ENCODE measurements at regions of chr2 and their contacts with region 1.

Region 1: GRCh38 chr2:154623819-154624218 is 74.7 kb upstream of the KCNJ3 start:
- DNase-seq: peak in 7 of 10 donors; percentile 34 to 68 (median 62)
- H3K4me3 ChIP-seq: no peak overlapping the region
- H3K27ac ChIP-seq: no peak overlapping the region
- H3K27me3 ChIP-seq: no peaks in the 10 kb centered on the region
- CTCF ChIP-seq: peak; percentile 57 to 89 (median 78)

Region 2: GRCh38 chr2:154097833-154098398 is 525.9 kb before region 1 on chr2:
- intact Hi-C with region 1: no loop called
- DNase-seq: no peak
- H3K4me3 ChIP-seq: no peak overlapping the region
- H3K27ac ChIP-seq: no peak overlapping the region
- H3K27me3 ChIP-seq: no peaks in the 10 kb centered on the region
- CTCF ChIP-seq: no peak

Region 3: DNA sequence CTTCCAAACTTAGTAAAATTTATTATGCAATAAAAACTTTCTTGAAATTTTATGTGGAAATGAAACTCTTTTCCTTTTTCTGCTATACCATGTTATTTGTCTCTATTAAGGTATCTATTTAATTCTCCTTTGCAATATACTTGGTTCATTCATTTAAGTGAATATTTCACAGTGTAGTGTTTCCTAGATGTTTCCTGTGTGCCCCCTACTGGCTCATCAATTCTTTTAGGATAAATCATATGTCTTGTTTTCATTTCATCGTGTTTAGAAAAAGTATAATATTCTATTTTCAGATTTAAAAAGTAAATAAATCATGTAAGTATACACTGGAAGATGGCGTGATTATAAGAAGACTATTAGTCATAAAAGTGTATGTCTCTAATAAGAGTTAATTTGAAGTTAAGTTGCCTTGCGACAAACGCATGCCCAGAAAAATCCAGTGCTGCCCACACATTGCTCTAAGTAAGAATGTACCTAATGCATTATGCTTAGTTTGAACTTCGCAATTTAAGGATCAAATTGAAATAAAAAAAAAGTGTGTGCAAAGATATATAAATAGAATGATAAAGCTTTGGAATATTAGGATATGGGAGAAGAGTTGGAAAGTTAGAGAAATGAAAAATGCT is 600.1 kb after region 1 on chr2:
- intact Hi-C with region 1: loop called in 1 of 2 experiments (anchors 5 kb)
- DNase-seq: peak in 1 of 10 donors; percentile 10
- H3K4me3 ChIP-seq: peak overlapping the region in 9 of 59 donors; percentile 9 to 34 (median 22)
- H3K27ac ChIP-seq: no peak overlapping the region
- H3K27me3 ChIP-seq: no peaks in the 10 kb centered on the region
- CTCF ChIP-seq: peak in 53 of 56 donors; percentile 39 to 76 (median 57)

Region 4: DNA sequence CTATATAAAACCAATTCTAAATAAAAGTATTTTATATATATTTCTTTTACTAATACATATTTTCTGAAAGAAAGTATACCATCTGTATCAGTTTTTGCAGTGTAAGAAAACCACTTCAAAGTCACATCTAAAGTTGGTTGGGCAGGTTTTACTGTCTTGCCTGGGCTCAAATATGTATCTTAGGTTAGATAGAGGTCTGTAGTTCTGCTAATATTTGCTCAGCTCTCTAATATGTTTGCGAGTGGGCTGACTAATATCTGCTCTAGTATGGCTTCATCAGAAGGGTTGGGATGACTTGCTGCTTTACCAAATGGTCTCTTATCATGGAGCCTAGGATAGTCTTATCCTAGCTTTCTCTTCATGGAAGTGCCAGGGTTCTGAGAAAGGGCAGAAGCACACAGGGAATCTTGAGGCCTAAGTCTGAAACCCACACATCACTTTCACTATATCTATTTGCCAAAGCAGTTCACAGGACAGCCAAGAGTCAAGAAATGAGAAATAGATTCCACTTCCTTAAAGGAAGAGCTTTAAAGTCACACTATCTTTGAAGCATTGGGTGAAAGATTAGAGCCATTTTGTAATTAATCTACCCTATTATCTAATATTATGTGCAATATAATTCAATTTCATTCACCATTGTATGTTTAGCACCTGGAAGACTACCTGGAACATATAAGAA is 684.7 kb after region 1 on chr2:
- intact Hi-C with region 1: loop called in 1 of 2 experiments (anchors 10 kb)
- DNase-seq: no peak
- H3K4me3 ChIP-seq: no peak overlapping the region
- H3K27ac ChIP-seq: no peak overlapping the region
- H3K27me3 ChIP-seq: peaks cover 0 to 7% (median 0%) of the 10 kb centered on the region in 45 donors
- CTCF ChIP-seq: no peak